ENCODE measurements at regions of chr20 and their contacts with region 1.

Region 1: DNA sequence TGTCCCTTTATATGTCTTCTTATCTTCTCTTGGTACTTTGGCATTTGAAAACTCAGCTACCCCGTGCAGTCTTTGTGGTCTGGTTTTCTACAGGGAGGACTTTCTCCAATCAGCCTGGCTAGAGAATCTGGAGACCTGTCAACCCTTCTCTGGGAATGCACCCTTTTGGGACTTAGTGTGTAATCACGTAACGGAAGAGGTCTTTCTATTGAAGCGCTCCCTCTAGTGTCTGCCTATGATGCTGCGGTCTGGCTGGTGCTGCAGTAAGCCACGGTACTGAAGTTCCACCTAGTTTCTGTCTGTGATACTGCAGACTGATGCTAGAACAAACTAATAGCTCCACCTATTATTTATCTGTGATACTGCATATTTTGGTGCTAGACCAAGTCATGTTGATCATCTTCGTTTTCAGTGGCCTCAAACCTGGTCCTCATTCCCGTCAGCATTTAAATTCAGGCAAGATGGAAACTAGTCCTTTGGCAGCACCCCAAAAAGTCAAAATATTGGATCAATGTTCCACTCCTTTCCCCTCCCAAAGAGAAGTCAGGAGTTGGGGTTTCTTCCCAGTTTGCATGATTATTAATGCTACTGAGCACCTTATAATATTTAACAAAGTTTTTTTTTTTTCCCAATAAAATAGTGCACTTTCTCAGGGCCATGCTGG is 12.5 kb upstream of the SIRPB2 start:
- DNase-seq: peak; percentile 66
- H3K4me3 ChIP-seq: no peak overlapping the region
- CTCF ChIP-seq: peak; percentile 99

Region 2: GRCh38 chr20:1313236-1313964 is 190.3 kb before region 1 on chr20:
- CTCF ChIA-PET with region 1: interaction called, 19 read pairs
- POLR2A ChIA-PET with region 1: no interaction called
- DNase-seq: no peak
- H3K4me3 ChIP-seq: peak overlapping the region; percentile 53
- CTCF ChIP-seq: peak; percentile 92

Region 3: DNA sequence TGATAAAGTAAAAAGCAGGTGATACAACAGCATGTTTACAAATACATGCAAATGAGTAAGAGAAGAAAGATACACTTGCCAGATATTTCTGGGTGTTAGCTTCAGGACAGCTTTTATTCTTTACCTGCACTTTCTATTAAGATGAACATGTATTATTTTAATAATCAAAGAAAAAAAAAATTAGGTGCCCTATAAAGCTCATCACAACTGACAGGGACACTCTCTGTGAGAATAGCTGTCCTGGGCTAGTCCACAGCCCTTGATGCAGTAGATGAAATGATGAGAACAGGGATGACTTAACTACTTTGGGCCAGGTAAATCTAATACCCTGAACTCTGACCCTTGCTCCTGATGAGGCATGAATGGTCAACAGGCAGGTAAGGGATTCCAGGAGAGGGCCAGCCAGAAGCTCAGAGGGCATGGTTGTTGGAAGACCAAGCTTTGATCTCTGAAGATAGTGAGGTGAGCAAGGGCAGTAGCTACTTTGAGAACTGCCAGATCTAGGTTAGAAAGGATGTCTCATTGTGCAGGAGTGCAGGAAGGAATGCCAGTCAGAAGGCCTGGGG is 52.7 kb before region 1 on chr20:
- CTCF ChIA-PET with region 1: interaction called, 20 read pairs
- POLR2A ChIA-PET with region 1: no interaction called
- DNase-seq: no peak
- H3K4me3 ChIP-seq: no peak overlapping the region
- CTCF ChIP-seq: no peak

Region 4: DNA sequence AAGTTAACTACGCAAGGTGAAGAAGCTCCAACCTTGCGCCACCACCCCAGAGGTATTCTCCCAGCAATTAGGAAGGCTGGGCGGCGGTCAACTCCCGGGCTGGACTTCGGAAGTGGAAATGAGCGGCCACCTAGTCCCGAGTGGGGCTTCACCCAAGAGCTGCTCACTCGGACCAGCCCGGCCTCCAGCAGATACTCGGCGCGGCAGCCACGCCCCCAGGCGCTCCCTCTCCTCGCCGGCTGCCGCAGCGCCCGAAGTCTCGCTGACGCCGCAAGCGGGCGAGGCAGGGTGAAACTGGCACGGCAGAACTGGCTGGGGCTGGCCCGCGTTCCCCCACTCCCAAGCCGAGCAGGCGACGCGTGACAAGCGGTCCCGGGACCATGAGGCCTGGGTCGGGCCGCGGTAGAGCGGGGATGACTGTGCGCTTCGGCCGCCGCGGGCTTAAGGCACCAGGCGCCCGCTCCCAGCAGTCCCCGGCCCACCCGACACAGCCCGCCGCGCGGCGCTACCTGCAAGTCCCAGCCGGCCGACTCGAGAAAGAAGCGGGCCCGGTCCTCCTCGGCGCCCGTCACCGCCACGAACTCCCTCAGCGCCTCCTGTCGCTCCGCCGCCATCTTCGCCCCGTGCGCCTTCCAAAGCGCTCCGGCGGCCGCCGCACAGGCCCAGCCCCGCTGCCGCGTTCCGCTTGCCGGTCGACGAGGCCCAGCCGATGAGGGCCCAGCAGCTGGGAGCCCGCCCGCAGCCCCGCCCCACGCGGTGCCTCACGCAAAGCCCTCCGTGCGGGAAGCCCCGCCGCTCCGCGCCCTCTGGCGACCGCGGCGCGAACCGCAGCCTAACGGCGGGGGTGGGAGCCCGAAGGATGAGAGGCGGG is 37.2 kb before region 1 on chr20 and contains the start of gene NSFL1C:
- CTCF ChIA-PET with region 1: interaction called, 53 read pairs
- POLR2A ChIA-PET with region 1: no interaction called
- DNase-seq: no peak
- H3K4me3 ChIP-seq: peak within 1 kb of the TSS; percentile 90
- CTCF ChIP-seq: peak; percentile 94

Region 5: DNA sequence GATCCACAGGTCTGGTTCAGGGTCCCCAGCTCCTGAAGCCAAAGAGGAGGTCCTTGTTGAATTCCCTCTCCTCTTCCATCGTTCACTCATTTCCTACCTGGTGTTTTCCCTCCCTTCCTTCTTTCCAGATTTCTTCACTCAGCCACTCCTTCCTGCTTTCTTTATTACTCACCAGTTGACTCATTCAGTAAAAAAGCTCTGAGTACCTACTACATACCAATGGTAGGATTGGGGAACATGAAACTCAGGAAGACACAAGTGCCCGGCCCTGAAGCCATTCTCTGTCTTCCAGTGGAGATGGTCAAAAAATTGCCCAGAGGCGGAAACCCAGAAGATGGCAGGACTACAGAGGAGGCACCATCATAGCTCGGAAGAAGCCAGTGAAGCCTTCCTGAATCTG is 25.1 kb before region 1 on chr20:
- CTCF ChIA-PET with region 1: interaction called, 22 read pairs
- POLR2A ChIA-PET with region 1: no interaction called
- DNase-seq: no peak
- H3K4me3 ChIP-seq: no peak overlapping the region
- CTCF ChIP-seq: no peak

Region 6: GRCh38 chr20:1491281-1491840 is 12.3 kb before region 1 on chr20 and contains the start of gene SIRPB2:
- CTCF ChIA-PET with region 1: interaction called, 46 read pairs
- POLR2A ChIA-PET with region 1: no interaction called
- DNase-seq: no peak
- H3K4me3 ChIP-seq: no peak within 1 kb of the TSS
- CTCF ChIP-seq: no peak

Region 7: GRCh38 chr20:1524004-1524403 is 20.3 kb after region 1 on chr20:
- CTCF ChIA-PET with region 1: interaction called, 10 read pairs
- POLR2A ChIA-PET with region 1: no interaction called
- DNase-seq: no peak
- H3K4me3 ChIP-seq: no peak overlapping the region
- CTCF ChIP-seq: no peak

Measured in AG04449 (cell line).